ENCODE measurements at regions of chr6 and their contacts with region 1.

Region 1: GRCh38 chr6:138765896-138766655 is 7.5 kb upstream of the CCDC28A start:
- DNase-seq: peak in 1 of 4 donors; percentile 48
- ATAC-seq: peak; percentile 54
- H3K4me3 ChIP-seq: no peak overlapping the region
- H3K27ac ChIP-seq: no peak overlapping the region
- H3K4me1 ChIP-seq: peaks cover 0 to 4% of the 10 kb centered on the region in 2 donors
- H3K27me3 ChIP-seq: no peaks in the 10 kb centered on the region
- CTCF ChIP-seq: peak; percentile 58 to 65

Region 2: GRCh38 chr6:138428944-138429598 is 337.0 kb before region 1 on chr6:
- intact Hi-C with region 1: loop called in 1 of 2 experiments (anchors 10 kb)
- DNase-seq: peak in 2 of 4 donors; percentile 48 to 65
- ATAC-seq: peak; percentile 53
- H3K4me3 ChIP-seq: no peak overlapping the region
- H3K27ac ChIP-seq: no peak overlapping the region
- H3K4me1 ChIP-seq: peaks cover 0 to 19% of the 10 kb centered on the region in 2 donors
- H3K27me3 ChIP-seq: no peaks in the 10 kb centered on the region
- CTCF ChIP-seq: peak; percentile 34 to 42

Region 3: GRCh38 chr6:138555421-138555988 is 210.6 kb before region 1 on chr6:
- intact Hi-C with region 1: no loop called
- DNase-seq: no peak
- ATAC-seq: peak; percentile 78
- H3K4me3 ChIP-seq: no peak overlapping the region
- H3K27ac ChIP-seq: peak overlapping the region; percentile 69 to 74
- H3K4me1 ChIP-seq: peaks cover 0 to 10% of the 10 kb centered on the region in 2 donors
- H3K27me3 ChIP-seq: no peaks in the 10 kb centered on the region
- CTCF ChIP-seq: no peak

Region 4: DNA sequence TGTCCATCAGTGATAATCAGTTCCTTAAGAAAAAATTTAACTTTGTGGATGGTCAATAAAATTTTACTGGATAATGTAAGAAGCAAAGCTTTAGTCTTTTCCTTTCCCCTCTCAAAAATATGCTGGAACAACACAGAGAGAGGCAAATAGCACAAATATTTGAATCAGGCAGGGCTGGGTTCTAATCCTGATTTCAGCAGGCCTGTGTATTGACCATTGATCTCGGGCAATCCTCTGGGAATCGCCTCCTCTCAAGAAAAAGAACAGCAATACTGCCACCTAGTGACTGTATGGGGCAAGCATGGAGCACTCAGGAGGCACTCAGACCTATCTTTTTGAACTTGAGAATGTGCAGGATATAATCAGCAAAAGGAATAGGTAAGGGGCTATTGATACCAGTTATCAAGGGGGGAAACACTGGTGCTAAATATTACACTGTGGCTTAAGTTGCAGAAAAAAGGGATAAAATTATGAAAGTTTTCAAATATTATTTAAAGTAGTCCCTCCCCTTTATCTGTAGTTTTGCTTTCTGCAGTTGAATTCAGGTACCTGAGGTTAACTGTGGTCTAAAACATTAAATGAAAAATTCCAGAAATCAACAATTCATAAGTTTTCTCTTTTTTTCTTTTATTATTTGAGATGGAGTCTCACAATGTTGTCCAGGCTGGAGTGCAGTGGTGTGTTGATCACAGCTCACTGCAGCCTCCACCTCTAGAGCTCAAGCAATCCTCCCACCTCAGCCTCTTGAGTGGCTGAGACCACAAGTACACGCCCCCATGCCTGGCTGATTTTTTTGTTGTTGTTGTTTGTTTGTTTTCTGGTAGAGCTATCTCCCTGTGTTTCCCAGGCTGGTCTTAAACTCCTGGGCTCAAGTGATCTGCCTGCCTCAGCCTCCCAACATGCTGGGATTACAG is 175.0 kb before region 1 on chr6:
- intact Hi-C with region 1: loop called (anchors 5 to 10 kb)
- DNase-seq: peak in 2 of 4 donors; percentile 58 to 72
- ATAC-seq: peak; percentile 65
- H3K4me3 ChIP-seq: no peak overlapping the region
- H3K27ac ChIP-seq: no peak overlapping the region
- H3K4me1 ChIP-seq: peaks cover 0 to 27% of the 10 kb centered on the region in 2 donors
- H3K27me3 ChIP-seq: no peaks in the 10 kb centered on the region
- CTCF ChIP-seq: peak; percentile 85 to 89

Measured in left lung (tissue), 14 donors.